BJ (cell line): ENCODE measurements at regions of chr12 and their contacts with region 1.

Region 1: DNA sequence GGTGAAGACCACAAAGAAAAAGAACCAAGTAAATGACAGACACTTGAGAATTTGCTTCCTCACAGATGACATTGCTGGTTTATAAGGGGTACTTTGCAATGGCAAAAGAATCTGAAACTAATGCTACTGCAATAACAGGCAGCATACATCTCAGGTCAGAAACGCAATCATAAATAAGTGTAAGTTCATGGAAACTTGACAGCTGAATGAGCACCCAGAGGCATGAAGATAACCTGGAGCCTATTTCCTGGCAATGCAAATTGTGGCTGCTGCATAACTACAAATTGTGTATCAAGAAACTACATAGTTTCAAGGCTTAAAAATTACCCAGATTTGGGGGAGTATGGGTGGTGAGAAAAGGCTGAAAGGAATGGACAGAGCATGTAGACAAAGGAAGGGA is 8.5 kb upstream of the MYO1A start:
- DNase-seq: no peak
- H3K4me3 ChIP-seq: no peak overlapping the region
- H3K27me3 ChIP-seq: no peaks in the 10 kb centered on the region
- CTCF ChIP-seq: no peak

Region 2: GRCh38 chr12:57046947-57047890 is 11.2 kb before region 1 on chr12:
- CTCF ChIA-PET with region 1: interaction called, 37 read pairs
- POLR2A ChIA-PET with region 1: no interaction called
- DNase-seq: no peak
- H3K4me3 ChIP-seq: no peak overlapping the region
- H3K27me3 ChIP-seq: peaks cover 6% of the 10 kb centered on the region
- CTCF ChIP-seq: no peak